ENCODE measurements at regions of chr12 and their contacts with region 1.

Region 1: DNA sequence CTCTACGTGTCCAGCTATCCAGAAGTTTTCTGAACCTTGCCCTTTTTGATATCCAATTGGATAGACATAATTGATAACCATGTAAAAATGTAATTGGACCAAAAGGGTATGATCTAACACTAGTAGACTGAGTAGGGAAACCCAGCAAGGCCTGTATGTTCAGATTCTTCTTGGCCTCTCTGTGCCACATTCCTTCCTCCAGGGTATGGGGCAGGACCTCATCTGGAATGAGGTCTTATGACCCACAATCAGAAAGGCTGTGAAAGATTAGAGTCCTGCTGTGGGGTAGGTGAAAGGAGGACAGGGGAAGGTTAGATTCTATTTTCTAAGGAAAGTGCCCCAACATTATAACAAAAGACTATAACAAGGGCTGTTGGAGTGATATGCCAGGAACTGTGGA is 51.3 kb upstream of the A2ML1 start:
- DNase-seq: no peak
- H3K4me3 ChIP-seq: no peak overlapping the region
- H3K27ac ChIP-seq: no peak overlapping the region
- H3K4me1 ChIP-seq: peaks cover 14% of the 10 kb centered on the region
- H3K27me3 ChIP-seq: no peaks in the 10 kb centered on the region
- CTCF ChIP-seq: peak; percentile 8

Region 2: DNA sequence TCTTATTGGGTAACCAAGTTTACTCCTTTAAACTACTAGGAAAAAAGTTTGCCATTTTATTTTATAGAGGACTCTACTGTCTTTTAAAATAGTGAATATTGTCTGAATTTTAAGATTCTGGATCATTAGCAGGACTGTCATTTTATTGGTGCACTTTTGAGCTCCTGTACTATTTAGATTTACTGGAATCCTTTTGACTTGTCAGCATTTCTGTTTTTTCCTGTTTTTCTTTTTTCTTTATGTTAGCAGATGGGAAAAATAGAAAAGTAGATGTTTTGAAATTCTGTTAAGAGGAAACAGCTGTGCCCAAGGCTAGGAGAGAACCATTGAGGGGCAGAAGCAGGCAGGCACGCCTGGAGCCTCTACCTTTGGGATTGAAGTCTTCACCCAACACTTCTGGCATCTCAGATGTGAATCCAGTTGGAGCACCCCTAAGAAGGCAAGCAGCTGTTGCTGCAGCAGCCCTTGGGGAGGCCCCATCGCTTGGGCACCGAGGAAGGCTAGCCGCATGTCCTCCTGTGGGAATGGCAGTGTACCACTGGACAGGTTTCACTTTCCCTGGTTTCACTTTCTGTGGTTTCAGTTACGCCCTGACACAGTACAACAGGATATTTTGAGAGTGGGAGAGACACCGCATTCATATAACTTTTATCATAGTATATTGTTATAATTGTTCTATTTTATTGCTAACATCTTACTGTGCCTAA is 61.8 kb before region 1 on chr12:
- intact Hi-C with region 1: no loop called
- DNase-seq: no peak
- H3K4me3 ChIP-seq: peak overlapping the region; percentile 52
- H3K27ac ChIP-seq: peak overlapping the region; percentile 60
- H3K4me1 ChIP-seq: peaks cover 38% of the 10 kb centered on the region
- H3K27me3 ChIP-seq: no peaks in the 10 kb centered on the region
- CTCF ChIP-seq: no peak

Region 3: DNA sequence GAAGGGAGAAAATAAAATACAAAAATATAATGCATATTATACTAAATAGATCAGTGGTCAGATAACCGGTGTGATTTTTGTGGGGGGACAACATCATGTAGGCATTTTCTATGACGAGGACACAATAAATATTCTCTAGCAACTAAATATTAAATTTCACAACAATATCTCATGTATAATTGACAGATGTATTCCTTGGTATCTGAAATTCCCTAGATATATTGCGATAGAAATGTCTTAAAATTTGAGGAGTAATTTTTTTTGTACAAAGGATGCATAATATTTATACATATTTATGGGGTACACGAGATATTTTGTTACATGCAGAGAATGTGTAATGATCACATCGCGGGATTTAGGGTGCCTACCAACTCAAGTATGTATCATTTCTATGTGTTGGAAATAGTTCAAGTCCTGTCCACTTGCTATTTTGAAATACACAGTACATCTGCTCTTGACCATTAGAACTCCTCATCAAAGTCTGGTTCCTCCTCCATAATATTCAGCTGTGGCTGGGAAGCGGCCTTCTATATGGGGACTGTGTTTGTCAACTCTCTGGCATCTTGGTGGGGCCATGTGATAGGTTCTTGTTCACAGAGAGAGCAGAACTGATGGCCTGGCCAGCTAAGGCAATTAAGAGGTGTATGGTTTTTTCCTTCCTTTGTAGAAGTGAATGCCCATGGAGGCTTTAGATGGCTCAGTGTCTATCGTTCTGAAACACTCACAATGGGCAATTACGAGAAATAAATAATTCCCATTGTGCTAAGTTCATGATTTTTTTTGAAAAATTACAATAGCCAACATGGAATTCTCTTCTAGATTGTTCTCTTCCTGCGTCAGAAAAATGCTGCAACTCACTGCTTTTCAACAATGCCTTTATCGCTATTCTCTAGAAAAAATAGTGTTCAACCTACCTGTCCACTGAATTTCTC is 335.8 kb after region 1 on chr12:
- intact Hi-C with region 1: loop called (anchors 5 kb)
- DNase-seq: no peak
- H3K4me3 ChIP-seq: no peak overlapping the region
- H3K27ac ChIP-seq: peak overlapping the region; percentile 29
- H3K4me1 ChIP-seq: peaks cover 29% of the 10 kb centered on the region
- H3K27me3 ChIP-seq: no peaks in the 10 kb centered on the region
- CTCF ChIP-seq: no peak

Measured in left ventricle myocardium inferior (tissue), 1 donor.